ENCODE measurements at regions of chr1 and their contacts with region 1.

Region 1: DNA sequence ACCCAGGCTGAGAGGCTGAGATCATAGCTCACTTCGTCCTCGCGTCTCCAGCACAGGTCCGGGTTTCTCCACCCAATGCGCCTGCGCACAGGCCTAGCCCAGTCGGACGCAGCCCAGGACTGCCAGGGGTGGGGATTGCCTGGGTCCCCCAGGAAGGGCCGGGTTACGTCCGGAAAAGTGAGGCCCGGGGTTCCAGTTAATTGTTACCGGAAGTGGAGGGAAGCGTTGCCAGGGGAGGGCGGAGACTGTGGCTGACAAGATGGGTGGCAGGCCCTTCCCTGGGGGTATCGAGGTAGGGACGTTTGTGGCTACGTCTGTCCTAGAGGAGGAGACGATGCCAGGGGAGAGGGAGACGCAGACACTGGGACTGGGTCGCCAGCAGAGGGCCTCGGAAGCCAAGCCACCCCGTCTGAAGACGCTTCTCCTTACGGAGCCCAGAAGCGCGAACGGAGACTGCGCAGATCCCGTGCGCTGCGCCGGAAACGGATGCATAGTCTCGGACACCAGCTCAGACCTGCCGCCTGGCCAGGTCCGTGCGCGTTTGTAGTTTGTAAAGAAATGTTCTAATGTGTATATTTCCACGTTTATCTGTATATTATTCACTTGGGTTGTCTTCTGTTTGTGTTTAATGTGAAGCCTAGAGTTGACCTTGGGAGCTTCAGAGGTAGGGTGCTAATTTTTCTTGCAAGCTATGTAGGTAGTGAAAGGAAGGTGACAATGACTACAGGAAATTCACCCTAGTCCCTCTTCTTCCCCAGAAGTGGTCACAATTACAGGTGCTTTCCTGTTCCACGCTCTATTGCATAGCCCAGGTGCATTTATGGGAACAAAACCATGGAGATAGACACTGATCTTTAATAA is 7.3 kb downstream of the RSRP1 start:
- DNase-seq: peak; percentile 97
- H3K4me3 Mint-ChIP-seq: peak overlapping the region; percentile 84
- H3K27ac Mint-ChIP-seq: peak overlapping the region; percentile 96
- H3K4me1 Mint-ChIP-seq: peaks cover 51% of the 10 kb centered on the region
- H3K27me3 Mint-ChIP-seq: no peaks in the 10 kb centered on the region

Region 2: DNA sequence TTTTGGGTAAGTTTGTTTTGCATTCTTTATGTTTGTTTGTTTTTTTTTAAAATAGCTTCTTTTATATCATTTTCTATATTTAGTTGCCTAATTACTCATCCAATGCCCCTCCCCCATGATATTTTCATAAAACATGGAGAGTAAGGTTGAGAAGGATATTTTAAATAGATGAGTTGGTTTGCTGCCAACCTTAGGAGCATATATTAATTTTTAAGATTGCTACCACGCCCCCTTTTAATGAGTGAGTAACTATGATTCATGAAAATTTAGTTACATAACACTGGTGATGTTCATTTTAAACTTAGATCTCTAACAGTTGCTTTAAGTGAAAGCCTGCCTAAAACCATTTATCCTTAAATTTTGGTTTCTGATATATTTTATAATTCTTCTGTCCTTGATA is 116.9 kb after region 1 on chr1:
- CTCF ChIA-PET with region 1: no interaction called
- POLR2A ChIA-PET with region 1: no interaction called
- intact Hi-C with region 1: loop called (anchors 5 kb)
- DNase-seq: no peak
- H3K4me3 Mint-ChIP-seq: no peak overlapping the region
- H3K27ac Mint-ChIP-seq: peak overlapping the region; percentile 82
- H3K4me1 Mint-ChIP-seq: peaks cover 35% of the 10 kb centered on the region
- H3K27me3 Mint-ChIP-seq: no peaks in the 10 kb centered on the region